CD8-positive, alpha-beta memory T cell (primary cell): ENCODE measurements at regions of chr1 and their contacts with region 1.

Region 1: GRCh38 chr1:228457396-228458176 is 29.6 kb upstream of the RNF187 start:
- DNase-seq: peak; percentile 70 to 93 (median 87)
- H3K4me3 ChIP-seq: peak overlapping the region; percentile 87
- H3K4me3 Mint-ChIP-seq: peak overlapping the region; percentile 91 to 99 (median 96)
- H3K27ac ChIP-seq: peak overlapping the region; percentile 95
- H3K27ac Mint-ChIP-seq: peak overlapping the region; percentile 98 to 100 (median 99)
- H3K4me1 ChIP-seq: peaks cover 34% of the 10 kb centered on the region
- H3K4me1 Mint-ChIP-seq: peaks cover 41 to 60% (median 53%) of the 10 kb centered on the region in 3 donors
- H3K27me3 ChIP-seq: no peaks in the 10 kb centered on the region
- H3K27me3 Mint-ChIP-seq: peaks cover 0 to 9% of the 10 kb centered on the region in 2 donors

Region 2: GRCh38 chr1:228387321-228387720 is 70.3 kb before region 1 on chr1:
- CTCF ChIA-PET with region 1: no interaction called
- POLR2A ChIA-PET with region 1: no interaction called
- DNase-seq: no peak
- H3K4me3 ChIP-seq: no peak overlapping the region
- H3K4me3 Mint-ChIP-seq: no peak overlapping the region
- H3K27ac ChIP-seq: no peak overlapping the region
- H3K27ac Mint-ChIP-seq: no peak overlapping the region
- H3K4me1 ChIP-seq: no peaks in the 10 kb centered on the region
- H3K4me1 Mint-ChIP-seq: no peaks in the 10 kb centered on the region
- H3K27me3 ChIP-seq: no peaks in the 10 kb centered on the region
- H3K27me3 Mint-ChIP-seq: peaks cover 0 to 4% of the 10 kb centered on the region in 2 donors

Region 3: GRCh38 chr1:228423404-228424053 is 34.1 kb before region 1 on chr1:
- CTCF ChIA-PET with region 1: no interaction called
- POLR2A ChIA-PET with region 1: no interaction called
- DNase-seq: no peak
- H3K4me3 ChIP-seq: no peak overlapping the region
- H3K4me3 Mint-ChIP-seq: no peak overlapping the region
- H3K27ac ChIP-seq: no peak overlapping the region
- H3K27ac Mint-ChIP-seq: no peak overlapping the region
- H3K4me1 ChIP-seq: no peaks in the 10 kb centered on the region
- H3K4me1 Mint-ChIP-seq: no peaks in the 10 kb centered on the region
- H3K27me3 ChIP-seq: no peaks in the 10 kb centered on the region
- H3K27me3 Mint-ChIP-seq: peaks cover 5 to 8% of the 10 kb centered on the region in 2 donors

Region 4: DNA sequence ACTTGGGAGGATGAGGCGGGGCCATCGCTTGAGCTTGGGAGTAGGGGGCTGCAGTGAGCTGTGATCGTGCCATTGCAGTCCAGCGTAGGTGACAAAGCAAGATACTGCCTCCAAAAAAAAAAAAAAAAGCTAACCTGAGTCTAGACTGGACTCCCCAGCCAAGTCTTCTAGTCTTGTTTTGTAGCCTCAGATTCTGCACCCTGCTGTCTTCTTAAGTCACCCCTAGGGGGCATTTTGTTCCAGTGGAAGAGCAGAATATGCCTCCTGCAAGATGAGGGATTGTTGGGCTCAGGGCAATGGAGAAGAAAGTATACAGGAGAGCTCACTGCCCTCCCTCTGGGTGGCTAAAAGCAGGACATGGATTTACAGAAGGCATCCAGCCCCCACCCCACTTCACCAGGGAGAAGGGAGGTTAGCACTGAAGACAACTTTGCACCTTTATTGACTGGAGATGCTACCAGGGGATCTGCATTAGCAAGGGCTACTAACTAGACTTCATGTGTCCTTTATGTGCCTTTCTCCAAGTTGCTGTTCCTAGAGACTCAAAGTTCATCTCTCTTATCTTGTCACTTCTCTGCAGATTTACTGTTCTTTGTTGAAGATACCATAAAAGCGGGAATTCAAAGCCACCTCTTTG is 14.3 kb after region 1 on chr1:
- CTCF ChIA-PET with region 1: interaction called, 25 read pairs
- POLR2A ChIA-PET with region 1: interaction called, 6 read pairs
- DNase-seq: peak in 2 of 5 donors; percentile 17 to 24
- H3K4me3 ChIP-seq: no peak overlapping the region
- H3K4me3 Mint-ChIP-seq: no peak overlapping the region
- H3K27ac ChIP-seq: no peak overlapping the region
- H3K27ac Mint-ChIP-seq: peak overlapping the region in 2 of 8 donors; percentile 1
- H3K4me1 ChIP-seq: no peaks in the 10 kb centered on the region
- H3K4me1 Mint-ChIP-seq: peaks cover 6 to 10% (median 6%) of the 10 kb centered on the region in 3 donors
- H3K27me3 ChIP-seq: no peaks in the 10 kb centered on the region
- H3K27me3 Mint-ChIP-seq: peaks cover 13 to 15% of the 10 kb centered on the region in 2 donors